HCT116 (cell line): ENCODE measurements at regions of chr2 and their contacts with region 1.

Region 1: DNA sequence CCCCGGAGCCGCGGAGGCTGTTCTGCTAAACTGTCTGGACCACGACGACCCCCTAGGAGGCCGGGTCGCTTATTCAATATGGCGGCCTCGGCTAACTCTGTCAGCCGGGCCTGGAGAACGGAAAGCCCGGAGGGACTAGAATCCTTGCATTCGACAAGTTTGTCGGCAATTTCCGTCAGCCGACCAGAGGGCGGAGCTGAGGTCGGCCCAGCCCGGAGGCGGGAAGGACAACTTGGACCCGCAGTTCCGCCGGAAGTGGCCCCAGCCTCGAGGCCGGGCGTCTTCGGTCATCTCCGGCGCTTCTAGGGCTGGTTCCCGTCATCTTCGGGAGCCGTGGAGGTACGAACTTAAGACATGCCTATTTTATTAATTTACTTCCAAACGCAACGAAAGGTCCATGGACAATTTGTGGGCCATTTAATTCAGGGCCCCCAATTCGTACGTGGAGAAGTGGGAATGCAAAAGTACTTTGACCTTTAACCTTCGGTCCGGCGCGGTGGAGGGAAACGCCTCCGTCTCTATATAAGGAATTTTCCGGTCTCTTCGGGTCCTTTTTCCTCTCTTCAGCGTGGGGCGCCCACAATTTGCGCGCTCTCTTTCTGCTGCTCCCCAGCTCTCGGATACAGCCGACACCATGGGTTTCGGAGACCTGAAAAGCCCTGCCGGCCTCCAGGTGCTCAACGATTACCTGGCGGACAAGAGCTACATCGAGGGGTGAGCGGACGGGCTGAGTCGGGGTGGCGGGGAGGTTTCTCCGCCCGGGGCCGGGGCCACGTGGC is at the starts of genes EEF1B2 and NDUFS1:
- DNase-seq: peak; percentile 96
- ATAC-seq: peak; percentile 90
- H3K4me3 ChIP-seq: peak within 1 kb of the TSS; percentile 85 to 97
- H3K27ac ChIP-seq: peak within 1 kb of the TSS; percentile 62
- H3K4me1 ChIP-seq: peaks cover 10 to 21% of the 10 kb centered on the region in 2 experiments; a peak in 3 of 4 replicates
- H3K27me3 ChIP-seq: no peaks in the 10 kb centered on the region
- CTCF ChIP-seq: no peak
- POLR2A ChIP-seq: peak; percentile 16
- RAD21 ChIP-seq: no peak
- total RNA-seq, gene EEF1B2: 985 TPM
- total RNA-seq, gene NDUFS1: 86.6 TPM

Region 2: GRCh38 chr2:206004004-206004693 is 155.4 kb before region 1 on chr2:
- CTCF ChIA-PET with region 1: interaction called, 3 read pairs
- POLR2A ChIA-PET with region 1: no interaction called
- RAD21 ChIA-PET with region 1: no interaction called
- intact Hi-C with region 1: loop called (anchors 10 kb)
- DNase-seq: peak; percentile 6
- ATAC-seq: peak; percentile 91
- H3K4me3 ChIP-seq: no peak overlapping the region
- H3K27ac ChIP-seq: no peak overlapping the region
- H3K4me1 ChIP-seq: no peaks in the 10 kb centered on the region
- H3K27me3 ChIP-seq: no peaks in the 10 kb centered on the region
- CTCF ChIP-seq: peak in 2 of 3 experiments; percentile 58 to 59; a peak in 4 of 6 replicates
- POLR2A ChIP-seq: no peak
- RAD21 ChIP-seq: peak; percentile 62

Region 3: GRCh38 chr2:206085742-206086445 is 73.6 kb before region 1 on chr2 and contains the start of gene INO80D:
- CTCF ChIA-PET with region 1: no interaction called
- POLR2A ChIA-PET with region 1: no interaction called
- RAD21 ChIA-PET with region 1: no interaction called
- intact Hi-C with region 1: loop called (anchors 2 kb)
- DNase-seq: peak; percentile 62
- ATAC-seq: peak; percentile 77
- H3K4me3 ChIP-seq: peak within 1 kb of the TSS; percentile 65 to 82
- H3K27ac ChIP-seq: peak within 1 kb of the TSS; percentile 89
- H3K4me1 ChIP-seq: peaks cover 8 to 12% of the 10 kb centered on the region in 2 experiments; a peak in 3 of 4 replicates
- H3K27me3 ChIP-seq: no peaks in the 10 kb centered on the region
- CTCF ChIP-seq: peak in 1 of 3 experiments; percentile 38; a peak in 3 of 6 replicates
- POLR2A ChIP-seq: peak; percentile 69
- RAD21 ChIP-seq: peak; percentile 9; the same call in 1 of the 2 replicates
- total RNA-seq, gene INO80D: 14.4 TPM

Region 4: GRCh38 chr2:206260188-206261012 is 100.9 kb after region 1 on chr2:
- CTCF ChIA-PET with region 1: no interaction called
- POLR2A ChIA-PET with region 1: no interaction called
- RAD21 ChIA-PET with region 1: no interaction called
- intact Hi-C with region 1: loop called (anchors 2 kb)
- DNase-seq: no peak
- ATAC-seq: peak; percentile 89
- H3K4me3 ChIP-seq: no peak overlapping the region
- H3K27ac ChIP-seq: no peak overlapping the region
- H3K4me1 ChIP-seq: no peaks in the 10 kb centered on the region
- H3K27me3 ChIP-seq: peaks cover 9% of the 10 kb centered on the region
- CTCF ChIP-seq: peak; percentile 28 to 60 (median 57); a peak in 5 of 6 replicates
- POLR2A ChIP-seq: no peak
- RAD21 ChIP-seq: peak; percentile 41; the same call in 1 of the 2 replicates

Region 5: DNA sequence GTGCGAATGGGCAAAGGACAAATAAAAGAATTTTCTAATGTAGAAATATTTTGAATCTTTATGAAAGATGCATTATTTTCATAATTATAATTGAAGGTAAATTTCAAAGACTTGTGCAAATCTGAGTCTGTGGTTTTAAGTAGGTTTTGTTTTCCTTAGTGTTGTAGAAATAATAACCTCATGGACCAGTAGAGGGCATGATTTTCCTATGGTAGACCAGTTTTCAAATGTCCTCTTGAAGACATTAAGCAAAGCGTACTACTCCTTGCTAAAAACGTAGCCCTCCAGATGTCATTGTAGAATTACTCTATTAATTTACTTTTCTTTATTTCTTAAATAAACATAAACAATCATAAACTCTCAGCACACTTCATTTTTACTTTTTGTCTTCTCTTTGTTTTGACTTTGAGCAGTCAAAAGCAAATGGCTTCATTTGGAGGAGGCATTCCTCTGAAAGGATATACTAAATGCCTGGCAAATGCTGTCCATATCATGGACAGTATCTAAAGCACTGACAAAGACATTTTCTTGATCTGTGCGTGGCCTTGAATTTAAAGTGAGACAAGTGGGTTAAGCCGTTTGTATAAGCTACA is 396.9 kb after region 1 on chr2:
- CTCF ChIA-PET with region 1: no interaction called
- POLR2A ChIA-PET with region 1: no interaction called
- RAD21 ChIA-PET with region 1: no interaction called
- intact Hi-C with region 1: loop called (anchors 5 kb)
- DNase-seq: peak; percentile 48
- ATAC-seq: peak; percentile 84
- H3K4me3 ChIP-seq: no peak overlapping the region
- H3K27ac ChIP-seq: no peak overlapping the region
- H3K4me1 ChIP-seq: no peaks in the 10 kb centered on the region
- H3K27me3 ChIP-seq: peaks cover 6% of the 10 kb centered on the region; the same call in 1 of the 2 replicates
- CTCF ChIP-seq: peak; percentile 38 to 61 (median 41); a peak in 5 of 6 replicates
- POLR2A ChIP-seq: no peak
- RAD21 ChIP-seq: peak; percentile 60

Region 6: DNA sequence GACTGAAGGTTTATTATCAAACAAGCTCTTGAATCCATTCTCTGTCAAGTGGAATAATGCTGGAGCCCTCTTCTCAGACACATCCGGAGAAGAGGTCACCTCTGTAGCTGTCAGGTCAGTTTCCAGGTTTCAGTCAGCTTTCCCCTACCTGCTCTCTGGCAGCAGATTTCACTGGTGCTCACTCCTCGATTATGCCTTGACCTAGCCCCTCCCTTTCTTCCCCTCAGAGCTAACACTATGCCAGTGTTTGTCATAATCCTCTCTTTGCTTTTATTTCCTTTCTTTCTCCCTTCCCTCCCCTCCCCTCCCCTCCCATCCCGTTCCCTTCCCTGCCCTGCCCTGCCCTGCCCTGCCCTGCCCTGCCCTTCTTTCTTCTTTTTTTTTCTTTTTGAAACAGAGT is 1888.3 kb after region 1 on chr2:
- CTCF ChIA-PET with region 1: no interaction called
- POLR2A ChIA-PET with region 1: no interaction called
- RAD21 ChIA-PET with region 1: no interaction called
- intact Hi-C with region 1: no loop called
- DNase-seq: no peak
- ATAC-seq: no peak
- H3K4me3 ChIP-seq: no peak overlapping the region
- H3K27ac ChIP-seq: no peak overlapping the region
- H3K4me1 ChIP-seq: no peaks in the 10 kb centered on the region
- H3K27me3 ChIP-seq: no peaks in the 10 kb centered on the region
- CTCF ChIP-seq: no peak
- POLR2A ChIP-seq: no peak
- RAD21 ChIP-seq: no peak